ENCODE measurements at regions of chr17 and their contacts with region 1.

Region 1: GRCh38 chr17:40598663-40599467 is 33.6 kb upstream of the CCR7 start:
- DNase-seq: peak; percentile 50 to 90 (median 83)
- ATAC-seq: peak; percentile 28 to 67
- H3K4me3 Mint-ChIP-seq: peak overlapping the region; percentile 53 to 86 (median 77)
- H3K27ac Mint-ChIP-seq: peak overlapping the region; percentile 95 to 100 (median 100)
- H3K4me1 Mint-ChIP-seq: peaks cover 48 to 99% (median 97%) of the 10 kb centered on the region in 4 donors
- H3K27me3 Mint-ChIP-seq: no peaks in the 10 kb centered on the region

Region 2: GRCh38 chr17:40340880-40341807 is 257.7 kb before region 1 on chr17:
- POLR2A ChIA-PET with region 1: interaction called, 10 read pairs
- DNase-seq: peak; percentile 78 to 95 (median 87)
- ATAC-seq: peak; percentile 63 to 81
- H3K4me3 Mint-ChIP-seq: peak overlapping the region; percentile 71 to 89 (median 84)
- H3K27ac Mint-ChIP-seq: peak overlapping the region; percentile 80 to 98 (median 96)
- H3K4me1 Mint-ChIP-seq: peaks cover 49 to 87% (median 81%) of the 10 kb centered on the region in 4 donors
- H3K27me3 Mint-ChIP-seq: no peaks in the 10 kb centered on the region

Region 3: GRCh38 chr17:40490289-40490853 is 108.5 kb before region 1 on chr17:
- POLR2A ChIA-PET with region 1: no interaction called
- DNase-seq: no peak
- ATAC-seq: peak in 1 of 2 donors; percentile 50
- H3K4me3 Mint-ChIP-seq: peak overlapping the region in 9 of 10 donors; percentile 18 to 77 (median 60)
- H3K27ac Mint-ChIP-seq: peak overlapping the region in 3 of 10 donors; percentile 44 to 76 (median 44)
- H3K4me1 Mint-ChIP-seq: peaks cover 21 to 48% (median 37%) of the 10 kb centered on the region in 4 donors
- H3K27me3 Mint-ChIP-seq: no peaks in the 10 kb centered on the region

Region 4: DNA sequence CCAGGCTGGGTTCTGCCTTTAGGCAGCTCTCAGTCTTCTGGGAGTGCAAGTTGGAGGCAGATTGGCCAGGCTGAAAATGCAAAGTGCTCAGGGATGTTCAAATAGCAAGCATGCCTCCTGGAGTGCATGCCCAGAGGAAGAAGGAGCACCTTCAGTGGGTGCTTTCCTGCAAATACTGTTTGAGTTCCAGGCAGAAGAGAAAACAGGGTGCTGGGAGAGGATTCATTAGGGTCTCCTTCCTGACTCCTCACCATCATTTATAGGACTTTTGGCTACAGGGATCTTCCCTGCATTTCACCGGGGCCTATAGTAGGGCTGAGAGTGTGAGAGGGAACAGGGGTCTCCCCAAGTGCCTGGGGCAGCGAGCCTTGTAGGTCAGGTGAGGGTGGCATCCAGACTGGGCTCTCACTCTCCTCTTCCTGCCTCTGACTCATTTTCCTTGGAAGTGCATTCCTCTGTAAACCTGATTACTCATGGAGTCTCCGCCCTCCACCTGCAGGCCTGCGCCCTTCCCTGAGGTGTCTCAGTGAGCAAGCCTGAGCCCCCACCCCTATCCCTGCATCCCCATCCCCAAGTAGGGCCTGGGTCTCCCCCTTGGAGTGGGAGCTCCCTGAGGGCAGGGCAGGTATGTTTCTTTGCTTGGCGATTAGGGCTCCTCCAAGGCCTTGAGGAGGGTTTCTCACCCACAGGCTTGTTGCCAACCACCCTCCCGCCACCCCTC is 80.3 kb before region 1 on chr17:
- POLR2A ChIA-PET with region 1: no interaction called
- DNase-seq: no peak
- ATAC-seq: no peak
- H3K4me3 Mint-ChIP-seq: peak overlapping the region in 6 of 10 donors; percentile 4 to 62 (median 38)
- H3K27ac Mint-ChIP-seq: peak overlapping the region in 4 of 10 donors; percentile 31 to 44 (median 39)
- H3K4me1 Mint-ChIP-seq: peaks cover 43 to 68% (median 66%) of the 10 kb centered on the region in 4 donors
- H3K27me3 Mint-ChIP-seq: peaks cover 0 to 15% (median 8%) of the 10 kb centered on the region in 5 donors

Region 5: DNA sequence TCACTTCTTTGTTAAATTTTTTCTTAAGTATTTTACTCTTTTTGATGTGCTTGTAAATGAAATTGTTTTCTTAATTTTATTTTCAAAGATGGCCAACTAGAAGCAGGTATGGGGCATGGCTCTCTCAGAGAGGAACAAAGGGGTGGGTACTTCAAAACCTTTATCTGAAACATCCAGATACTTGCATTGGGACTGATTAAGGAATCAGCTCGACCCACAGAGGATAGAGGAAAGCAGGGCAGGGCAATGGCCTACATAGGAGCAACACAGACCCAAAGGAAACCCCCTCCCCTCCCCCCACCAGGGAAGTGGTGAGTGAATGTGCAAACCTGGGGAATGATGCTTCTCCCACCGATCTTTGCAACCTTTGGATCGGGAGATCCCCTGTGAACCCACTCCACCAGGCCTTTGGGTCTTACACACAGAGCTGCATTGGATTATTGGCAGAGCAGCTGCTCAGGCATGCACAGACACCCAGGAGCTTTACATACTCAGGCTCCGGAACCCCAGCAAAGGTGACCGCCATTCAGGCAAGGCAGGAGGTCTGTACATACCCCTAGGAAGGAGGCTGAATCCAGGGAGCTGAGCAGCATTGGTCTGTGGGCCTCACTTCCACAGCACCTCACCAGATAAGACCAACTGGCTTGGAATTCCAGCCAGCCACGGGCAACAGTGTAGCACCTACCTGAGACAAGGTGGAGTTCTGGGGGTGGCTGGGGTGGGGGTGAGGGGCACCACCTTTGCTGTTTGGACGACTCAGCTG is 30.6 kb before region 1 on chr17:
- POLR2A ChIA-PET with region 1: interaction called, 2,269 read pairs
- DNase-seq: no peak
- ATAC-seq: no peak
- H3K4me3 Mint-ChIP-seq: peak overlapping the region in 4 of 10 donors; percentile 2 to 35 (median 12)
- H3K27ac Mint-ChIP-seq: peak overlapping the region in 8 of 10 donors; percentile 37 to 100 (median 78)
- H3K4me1 Mint-ChIP-seq: peaks cover 34 to 89% (median 72%) of the 10 kb centered on the region in 4 donors
- H3K27me3 Mint-ChIP-seq: no peaks in the 10 kb centered on the region

Region 6: DNA sequence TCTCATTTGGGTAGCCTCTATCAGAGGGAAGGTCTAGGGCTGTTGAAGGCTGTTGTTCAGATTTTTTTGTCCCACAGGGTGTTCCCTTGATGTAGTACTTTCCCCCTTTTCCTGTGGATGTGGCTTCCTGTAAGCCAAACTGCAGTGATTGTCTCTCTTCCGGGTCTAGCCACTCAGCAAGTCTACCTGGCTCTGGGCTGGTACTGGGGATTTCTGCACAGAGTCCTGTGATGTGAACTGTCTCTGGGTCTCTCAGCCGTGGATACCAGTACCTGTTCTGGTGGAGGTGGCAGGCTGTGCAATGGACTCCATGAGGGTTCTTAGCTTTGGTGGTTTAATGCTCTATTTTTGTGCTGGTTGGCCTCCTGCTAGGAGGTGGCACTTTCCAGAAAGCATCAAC is 10.3 kb before region 1 on chr17:
- POLR2A ChIA-PET with region 1: interaction called, 116 read pairs
- DNase-seq: no peak
- ATAC-seq: peak in 1 of 2 donors; percentile 44
- H3K4me3 Mint-ChIP-seq: peak overlapping the region; percentile 6 to 81 (median 72)
- H3K27ac Mint-ChIP-seq: peak overlapping the region; percentile 89 to 99 (median 94)
- H3K4me1 Mint-ChIP-seq: peaks cover 50 to 88% (median 83%) of the 10 kb centered on the region in 4 donors
- H3K27me3 Mint-ChIP-seq: no peaks in the 10 kb centered on the region

Region 7: DNA sequence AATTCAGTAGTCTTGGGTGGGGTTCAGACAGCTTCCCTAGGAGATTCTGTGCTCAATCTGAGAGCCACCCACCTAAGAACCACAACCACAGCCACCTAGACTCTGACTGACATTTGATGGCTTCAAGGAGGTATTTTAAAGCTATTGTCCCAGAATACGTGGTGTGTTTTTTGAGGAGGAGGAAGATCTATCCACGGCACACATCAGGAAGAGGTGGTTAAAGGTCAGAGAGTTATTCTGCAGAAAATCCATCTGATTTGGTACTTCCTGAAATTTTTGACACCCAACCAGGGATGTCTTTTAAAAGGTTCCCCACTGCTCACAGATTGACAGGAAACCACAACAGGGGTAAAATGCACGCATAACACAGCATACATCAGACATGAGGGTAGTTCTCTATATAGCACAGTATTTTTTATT is 23.7 kb after region 1 on chr17:
- POLR2A ChIA-PET with region 1: interaction called, 237 read pairs
- DNase-seq: peak in 4 of 10 donors; percentile 54 to 81 (median 72)
- ATAC-seq: peak; percentile 77 to 89
- H3K4me3 Mint-ChIP-seq: peak overlapping the region; percentile 13 to 78 (median 74)
- H3K27ac Mint-ChIP-seq: peak overlapping the region; percentile 14 to 96 (median 86)
- H3K4me1 Mint-ChIP-seq: peaks cover 20 to 71% (median 66%) of the 10 kb centered on the region in 4 donors
- H3K27me3 Mint-ChIP-seq: no peaks in the 10 kb centered on the region

Region 8: GRCh38 chr17:40664582-40665333 is 65.9 kb after region 1 on chr17 and contains the start of gene KRT222:
- POLR2A ChIA-PET with region 1: no interaction called
- DNase-seq: no peak
- ATAC-seq: peak in 1 of 2 donors; percentile 42
- H3K4me3 Mint-ChIP-seq: peak within 1 kb of the TSS; percentile 8 to 80 (median 46)
- H3K27ac Mint-ChIP-seq: peak within 1 kb of the TSS in 1 of 10 donors; percentile 63
- H3K4me1 Mint-ChIP-seq: peaks cover 4 to 13% (median 9%) of the 10 kb centered on the region in 4 donors
- H3K27me3 Mint-ChIP-seq: peaks cover 10 to 46% (median 22%) of the 10 kb centered on the region in 5 donors
- polyA plus RNA-seq, gene KRT222: 0.09 TPM in 1 of 3 donors, not detected in the others